ENCODE measurements at regions of chr10 and their contacts with region 1.

Region 1: DNA sequence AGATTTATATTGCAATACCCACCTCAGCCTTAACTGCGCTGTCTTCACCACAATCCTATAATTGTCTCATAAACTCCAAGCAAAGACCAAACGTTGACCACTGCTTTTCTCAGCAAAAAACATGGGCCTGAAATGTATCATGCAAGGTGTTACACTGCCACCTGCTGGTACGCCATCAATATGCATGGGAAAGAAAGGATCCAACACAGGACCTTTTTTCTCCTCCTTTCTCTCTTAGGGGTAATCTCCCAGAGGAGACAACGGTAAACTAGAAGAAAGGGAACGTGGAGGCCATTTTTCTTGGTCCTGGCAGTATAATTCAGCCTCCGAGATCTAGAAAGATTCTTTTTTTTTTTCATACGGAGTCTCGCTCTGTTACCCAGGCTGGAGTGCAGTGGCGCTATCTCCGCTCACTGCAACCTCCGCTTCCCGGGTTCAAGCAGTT is 79.1 kb upstream of the MPP7 start:
- DNase-seq: peak; percentile 67 to 91 (median 88)
- ATAC-seq: peak; percentile 97
- H3K4me3 ChIP-seq: no peak overlapping the region
- H3K4me3 Mint-ChIP-seq: no peak overlapping the region
- H3K27ac ChIP-seq: no peak overlapping the region
- H3K27ac Mint-ChIP-seq: peak overlapping the region; percentile 58
- H3K4me1 ChIP-seq: peaks cover 25% of the 10 kb centered on the region
- H3K4me1 Mint-ChIP-seq: peaks cover 27% of the 10 kb centered on the region
- H3K27me3 ChIP-seq: no peaks in the 10 kb centered on the region
- H3K27me3 Mint-ChIP-seq: peaks cover 2% of the 10 kb centered on the region
- CTCF ChIP-seq: peak; percentile 96

Region 2: GRCh38 chr10:27542812-27543211 is 839.1 kb before region 1 on chr10:
- CTCF ChIA-PET with region 1: no interaction called
- POLR2A ChIA-PET with region 1: no interaction called
- intact Hi-C with region 1: loop called in 1 of 2 experiments (anchors 10 kb)
- DNase-seq: no peak
- ATAC-seq: no peak
- H3K4me3 ChIP-seq: no peak overlapping the region
- H3K4me3 Mint-ChIP-seq: no peak overlapping the region
- H3K27ac ChIP-seq: peak overlapping the region in 1 of 2 experiments; percentile 74
- H3K27ac Mint-ChIP-seq: peak overlapping the region; percentile 64
- H3K4me1 ChIP-seq: peaks cover 21% of the 10 kb centered on the region
- H3K4me1 Mint-ChIP-seq: peaks cover 47% of the 10 kb centered on the region
- H3K27me3 ChIP-seq: no peaks in the 10 kb centered on the region
- H3K27me3 Mint-ChIP-seq: no peaks in the 10 kb centered on the region
- CTCF ChIP-seq: no peak

Region 3: GRCh38 chr10:28179006-28179742 is 202.8 kb before region 1 on chr10:
- CTCF ChIA-PET with region 1: interaction called, 4 read pairs
- POLR2A ChIA-PET with region 1: no interaction called
- intact Hi-C with region 1: loop called (anchors 2 kb)
- DNase-seq: peak in 3 of 9 experiments; percentile 32 to 77 (median 68)
- ATAC-seq: peak; percentile 54
- H3K4me3 ChIP-seq: peak overlapping the region; percentile 22 to 45
- H3K4me3 Mint-ChIP-seq: peak overlapping the region; percentile 91
- H3K27ac ChIP-seq: peak overlapping the region in 1 of 2 experiments; percentile 69
- H3K27ac Mint-ChIP-seq: peak overlapping the region; percentile 95
- H3K4me1 ChIP-seq: peaks cover 16% of the 10 kb centered on the region
- H3K4me1 Mint-ChIP-seq: peaks cover 44% of the 10 kb centered on the region
- H3K27me3 ChIP-seq: no peaks in the 10 kb centered on the region
- H3K27me3 Mint-ChIP-seq: no peaks in the 10 kb centered on the region
- CTCF ChIP-seq: peak; percentile 93

Region 4: GRCh38 chr10:28266449-28267224 is 115.3 kb before region 1 on chr10:
- CTCF ChIA-PET with region 1: interaction called, 10 read pairs
- POLR2A ChIA-PET with region 1: no interaction called
- intact Hi-C with region 1: no loop called
- DNase-seq: no peak
- ATAC-seq: no peak
- H3K4me3 ChIP-seq: no peak overlapping the region
- H3K4me3 Mint-ChIP-seq: no peak overlapping the region
- H3K27ac ChIP-seq: no peak overlapping the region
- H3K27ac Mint-ChIP-seq: no peak overlapping the region
- H3K4me1 ChIP-seq: no peaks in the 10 kb centered on the region
- H3K4me1 Mint-ChIP-seq: peaks cover 32% of the 10 kb centered on the region
- H3K27me3 ChIP-seq: no peaks in the 10 kb centered on the region
- H3K27me3 Mint-ChIP-seq: no peaks in the 10 kb centered on the region
- CTCF ChIP-seq: no peak

Region 5: GRCh38 chr10:28317760-28318159 is 64.2 kb before region 1 on chr10:
- CTCF ChIA-PET with region 1: interaction called, 25 read pairs
- POLR2A ChIA-PET with region 1: no interaction called
- intact Hi-C with region 1: no loop called
- DNase-seq: no peak
- ATAC-seq: no peak
- H3K4me3 ChIP-seq: no peak overlapping the region
- H3K4me3 Mint-ChIP-seq: no peak overlapping the region
- H3K27ac ChIP-seq: no peak overlapping the region
- H3K27ac Mint-ChIP-seq: no peak overlapping the region
- H3K4me1 ChIP-seq: no peaks in the 10 kb centered on the region
- H3K4me1 Mint-ChIP-seq: peaks cover 55% of the 10 kb centered on the region
- H3K27me3 ChIP-seq: no peaks in the 10 kb centered on the region
- H3K27me3 Mint-ChIP-seq: no peaks in the 10 kb centered on the region
- CTCF ChIP-seq: no peak

Region 6: GRCh38 chr10:28367929-28368484 is 13.9 kb before region 1 on chr10:
- CTCF ChIA-PET with region 1: interaction called, 43 read pairs
- POLR2A ChIA-PET with region 1: interaction called, 23 read pairs
- intact Hi-C with region 1: loop called in 1 of 2 experiments (anchors 1 kb)
- DNase-seq: peak; percentile 14 to 91 (median 68)
- ATAC-seq: peak; percentile 92
- H3K4me3 ChIP-seq: peak overlapping the region in 1 of 2 experiments; percentile 1
- H3K4me3 Mint-ChIP-seq: peak overlapping the region; percentile 74
- H3K27ac ChIP-seq: peak overlapping the region; percentile 51 to 77
- H3K27ac Mint-ChIP-seq: peak overlapping the region; percentile 96
- H3K4me1 ChIP-seq: peaks cover 52% of the 10 kb centered on the region
- H3K4me1 Mint-ChIP-seq: peaks cover 52% of the 10 kb centered on the region
- H3K27me3 ChIP-seq: no peaks in the 10 kb centered on the region
- H3K27me3 Mint-ChIP-seq: no peaks in the 10 kb centered on the region
- CTCF ChIP-seq: no peak